PC-9 (cell line): ENCODE measurements at regions of chr10 and their contacts with region 1.

Region 1: GRCh38 chr10:72223743-72224101 is 7.6 kb upstream of the ASCC1 start:
- DNase-seq: no peak
- H3K4me3 ChIP-seq: no peak overlapping the region
- H3K27ac ChIP-seq: peak overlapping the region; percentile 23; the same call in 1 of the 2 replicates
- H3K4me1 ChIP-seq: peaks cover 13% of the 10 kb centered on the region
- H3K27me3 ChIP-seq: no peaks in the 10 kb centered on the region
- CTCF ChIP-seq: no peak

Region 2: DNA sequence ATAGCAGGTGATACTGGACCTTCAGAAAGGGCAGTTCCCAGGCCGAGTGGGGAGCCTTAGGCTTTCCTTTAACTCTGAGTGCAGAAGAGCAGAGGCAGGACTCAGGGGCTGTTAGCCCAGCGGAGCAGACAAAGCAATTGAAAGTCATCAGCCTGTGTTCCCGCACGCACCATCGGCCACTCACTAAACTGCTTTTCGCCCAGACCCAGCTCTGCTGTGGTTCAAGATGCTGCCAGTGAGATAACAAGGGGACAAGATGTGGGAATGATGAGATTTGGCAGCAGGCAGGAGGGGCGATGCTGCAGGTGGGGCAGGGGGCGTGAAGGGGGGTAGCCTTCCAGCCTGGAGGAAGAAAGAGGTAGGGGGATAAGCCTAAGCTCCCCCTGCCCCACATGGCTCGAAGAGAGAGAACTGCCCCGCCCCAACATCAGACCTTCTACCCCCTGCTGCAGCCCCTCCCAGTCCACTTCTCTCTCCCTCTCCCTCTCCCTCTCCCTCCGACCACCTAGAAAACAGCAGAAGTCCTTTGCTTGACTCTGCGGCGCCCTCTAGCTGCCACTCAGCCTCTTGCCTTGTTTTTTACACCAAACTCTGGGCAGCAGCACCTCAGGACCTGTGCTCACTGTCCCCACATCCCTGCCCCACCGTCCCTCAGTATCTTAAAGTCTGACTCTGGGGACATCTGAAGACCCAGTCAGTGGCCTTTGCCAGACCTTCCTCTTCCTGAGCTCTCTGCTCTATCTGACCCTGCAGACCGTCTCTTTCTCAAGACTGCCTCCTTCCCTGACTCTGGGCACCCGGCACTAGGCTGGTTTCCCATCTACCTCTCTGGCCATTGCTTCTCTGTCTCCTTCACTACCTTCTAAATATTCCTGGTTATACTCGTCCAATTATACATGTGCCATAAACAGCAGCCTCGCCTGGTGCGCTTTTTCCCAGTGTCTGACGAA is 614.6 kb before region 1 on chr10:
- CTCF ChIA-PET with region 1: no interaction called
- POLR2A ChIA-PET with region 1: no interaction called
- intact Hi-C with region 1: no loop called
- DNase-seq: peak; percentile 48 to 69
- H3K4me3 ChIP-seq: no peak overlapping the region
- H3K27ac ChIP-seq: no peak overlapping the region
- H3K4me1 ChIP-seq: peaks cover 60% of the 10 kb centered on the region
- H3K27me3 ChIP-seq: no peaks in the 10 kb centered on the region
- CTCF ChIP-seq: peak; percentile 92

Region 3: DNA sequence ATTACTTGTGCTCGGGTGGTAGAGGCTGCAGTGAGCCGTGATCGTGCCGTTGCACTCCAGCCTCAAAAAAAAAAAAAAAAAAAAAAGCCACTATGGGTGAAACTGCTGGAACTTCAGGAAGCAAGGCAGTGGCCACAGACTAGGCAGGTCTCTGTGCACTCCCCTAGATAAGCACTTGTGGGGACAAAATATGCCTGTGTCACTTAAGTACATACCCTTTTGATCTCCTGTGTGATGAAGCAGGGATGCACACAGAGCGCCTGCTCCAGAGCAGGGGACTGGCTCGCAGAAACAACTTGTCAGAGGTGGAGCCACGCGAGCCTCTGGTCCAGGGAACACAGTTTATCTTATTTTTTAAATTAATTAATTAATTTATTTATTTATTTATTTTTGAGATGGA is 329.8 kb before region 1 on chr10:
- CTCF ChIA-PET with region 1: interaction called, 7 read pairs
- POLR2A ChIA-PET with region 1: no interaction called
- intact Hi-C with region 1: loop called (anchors 1 kb)
- DNase-seq: no peak
- H3K4me3 ChIP-seq: no peak overlapping the region
- H3K27ac ChIP-seq: no peak overlapping the region
- H3K4me1 ChIP-seq: peaks cover 16% of the 10 kb centered on the region
- H3K27me3 ChIP-seq: no peaks in the 10 kb centered on the region
- CTCF ChIP-seq: no peak

Region 4: GRCh38 chr10:72162978-72163377 is 60.7 kb before region 1 on chr10:
- CTCF ChIA-PET with region 1: no interaction called
- POLR2A ChIA-PET with region 1: no interaction called
- intact Hi-C with region 1: no loop called
- DNase-seq: no peak
- H3K4me3 ChIP-seq: no peak overlapping the region
- H3K27ac ChIP-seq: 0 out of 2 replicates have a peak overlapping the region, but pooled peaks have one; percentile 5
- H3K4me1 ChIP-seq: no peaks in the 10 kb centered on the region
- H3K27me3 ChIP-seq: no peaks in the 10 kb centered on the region
- CTCF ChIP-seq: no peak

Region 5: DNA sequence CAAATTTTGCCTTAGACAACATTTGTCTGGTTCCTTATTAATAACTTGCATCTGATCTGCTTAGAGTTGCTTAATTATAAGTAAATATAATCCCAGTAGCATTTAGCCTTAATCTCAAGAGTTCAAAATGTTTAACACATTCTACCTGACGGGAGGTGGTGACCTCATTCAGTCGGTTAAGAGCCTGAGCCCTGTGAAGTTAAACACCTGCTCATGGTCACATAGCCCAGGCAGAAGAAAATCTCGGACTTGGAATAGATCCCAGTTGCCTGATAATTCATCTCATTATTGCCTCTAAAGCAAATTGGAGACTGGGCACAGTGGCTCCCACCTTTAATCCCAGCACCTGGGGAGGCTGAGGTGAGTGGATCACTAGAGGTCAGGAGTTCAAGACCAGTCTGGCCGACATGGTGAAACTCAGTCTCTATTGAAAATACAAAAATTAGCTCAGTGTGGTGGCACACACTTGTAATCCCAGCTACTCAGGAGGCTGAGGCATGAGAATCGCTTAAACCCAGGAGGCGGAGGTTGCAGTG is 10.9 kb after region 1 on chr10:
- CTCF ChIA-PET with region 1: no interaction called
- POLR2A ChIA-PET with region 1: interaction called, 11 read pairs
- intact Hi-C with region 1: no loop called
- DNase-seq: no peak
- H3K4me3 ChIP-seq: no peak overlapping the region
- H3K27ac ChIP-seq: 0 out of 2 replicates have a peak overlapping the region, but pooled peaks have one; percentile 8
- H3K4me1 ChIP-seq: no peaks in the 10 kb centered on the region
- H3K27me3 ChIP-seq: no peaks in the 10 kb centered on the region
- CTCF ChIP-seq: no peak

Region 6: GRCh38 chr10:72297968-72298773 is 74.4 kb after region 1 on chr10:
- CTCF ChIA-PET with region 1: no interaction called
- POLR2A ChIA-PET with region 1: interaction called, 10 read pairs
- intact Hi-C with region 1: no loop called
- DNase-seq: peak; percentile 95 to 98
- H3K4me3 ChIP-seq: peak overlapping the region; percentile 66
- H3K27ac ChIP-seq: peak overlapping the region; percentile 89
- H3K4me1 ChIP-seq: peaks cover 42% of the 10 kb centered on the region
- H3K27me3 ChIP-seq: no peaks in the 10 kb centered on the region
- CTCF ChIP-seq: no peak